ENCODE measurements at regions of chr16 and their contacts with region 1.

Region 1: DNA sequence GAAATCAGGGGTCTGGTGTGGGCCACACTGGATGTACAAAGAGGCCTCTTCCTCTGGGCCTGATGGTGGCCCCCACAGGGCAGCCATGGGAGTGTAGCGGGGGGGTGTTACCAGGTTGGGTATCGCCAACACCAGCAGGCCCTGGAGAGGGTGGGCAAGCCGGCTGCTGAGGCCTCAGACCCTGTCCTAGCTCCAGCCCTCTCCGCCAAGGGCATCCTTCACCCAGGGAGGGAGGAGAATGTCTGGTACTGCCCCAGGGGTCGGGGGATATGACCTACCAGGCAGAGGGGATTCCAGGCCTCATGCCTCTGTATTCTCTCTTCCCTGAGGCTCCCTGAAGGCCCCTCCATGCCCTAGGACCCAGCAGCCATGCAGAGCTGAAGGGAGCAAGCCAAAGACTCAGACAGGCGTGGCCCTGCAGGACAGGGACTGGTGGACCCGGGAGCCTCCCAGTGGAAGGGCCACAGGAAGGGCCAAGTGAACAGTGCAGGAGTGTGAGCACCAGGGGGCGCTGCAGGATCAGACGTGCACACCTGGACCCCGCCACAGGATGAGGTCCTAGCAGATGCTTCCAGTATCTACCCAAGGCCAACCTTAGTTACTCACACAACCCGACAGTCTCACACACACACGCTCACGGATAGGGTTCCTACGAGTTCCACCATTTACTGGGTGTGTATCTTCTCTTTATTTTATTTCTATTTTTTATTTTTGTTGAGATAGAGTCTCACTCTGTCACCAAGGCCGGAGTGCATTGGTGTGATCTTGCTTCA is 10.9 kb upstream of the CES4A start:
- DNase-seq: peak; percentile 90 to 97 (median 95)
- H3K4me3 ChIP-seq: no peak overlapping the region
- H3K27ac ChIP-seq: no peak overlapping the region
- H3K4me1 ChIP-seq: no peaks in the 10 kb centered on the region
- H3K27me3 ChIP-seq: no peaks in the 10 kb centered on the region
- CTCF ChIP-seq: peak; percentile 95 to 99 (median 98)
- POLR2A ChIP-seq: no peak

Region 2: GRCh38 chr16:67104061-67104460 is 126.5 kb after region 1 on chr16:
- intact Hi-C with region 1: loop called in 1 of 2 experiments (anchors 5 kb)
- DNase-seq: peak in 6 of 7 donors; percentile 31 to 63 (median 49)
- H3K4me3 ChIP-seq: no peak overlapping the region
- H3K27ac ChIP-seq: no peak overlapping the region
- H3K4me1 ChIP-seq: peaks cover under 1 to 1% of the 10 kb centered on the region in 2 donors
- H3K27me3 ChIP-seq: no peaks in the 10 kb centered on the region
- CTCF ChIP-seq: peak in 5 of 6 experiments; percentile 22 to 47 (median 34)
- POLR2A ChIP-seq: no peak

Region 3: GRCh38 chr16:67146523-67147357 is 169.2 kb after region 1 on chr16:
- intact Hi-C with region 1: loop called in 1 of 2 experiments (anchors 2 kb)
- DNase-seq: no peak
- H3K4me3 ChIP-seq: no peak overlapping the region
- H3K27ac ChIP-seq: no peak overlapping the region
- H3K4me1 ChIP-seq: peaks cover 0 to 6% of the 10 kb centered on the region in 2 donors
- H3K27me3 ChIP-seq: no peaks in the 10 kb centered on the region
- CTCF ChIP-seq: no peak
- POLR2A ChIP-seq: no peak

Region 4: GRCh38 chr16:67216612-67217490 is 239.3 kb after region 1 on chr16:
- intact Hi-C with region 1: no loop called
- DNase-seq: peak in 6 of 7 donors; percentile 57 to 79 (median 70)
- H3K4me3 ChIP-seq: no peak overlapping the region
- H3K27ac ChIP-seq: peak overlapping the region in 2 of 5 donors; percentile 32 to 64
- H3K4me1 ChIP-seq: peaks cover 0 to 18% of the 10 kb centered on the region in 2 donors
- H3K27me3 ChIP-seq: no peaks in the 10 kb centered on the region
- CTCF ChIP-seq: no peak
- POLR2A ChIP-seq: no peak

Measured in adrenal gland (tissue), 19 donors.